Activated B cell treated with CpG ODN at 0.5 μM for 24 hours (primary cell): ENCODE measurements at regions of chr17 and their contacts with region 1.

Region 1: DNA sequence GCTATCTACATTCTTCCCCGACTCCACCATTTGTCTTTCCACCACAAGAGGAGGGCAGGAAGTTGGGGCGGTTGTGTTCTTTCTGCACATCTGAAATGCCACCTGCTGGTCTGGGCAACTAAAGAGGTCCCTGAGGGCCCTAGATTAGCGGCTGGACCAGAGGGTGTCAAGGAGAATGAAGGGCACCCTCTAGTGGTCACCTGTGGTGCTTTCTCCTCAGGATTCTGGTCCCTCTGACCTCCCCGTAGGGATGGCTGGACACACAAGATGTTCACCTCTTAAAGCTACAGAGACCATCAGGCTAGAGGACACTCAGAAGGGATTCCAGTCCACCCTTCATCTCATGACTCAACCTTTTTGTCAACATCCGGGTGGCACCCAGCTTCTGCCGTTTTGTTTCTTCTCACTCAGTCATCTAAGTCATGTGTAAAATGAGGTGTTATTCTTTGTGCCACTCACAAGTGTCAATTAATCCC is 2.9 kb upstream of the SCIMP start:
- DNase-seq: no peak
- ATAC-seq: peak; percentile 18
- H3K4me3 Mint-ChIP-seq: peak overlapping the region; percentile 36
- H3K27ac Mint-ChIP-seq: peak overlapping the region; percentile 98
- H3K4me1 Mint-ChIP-seq: peaks cover 78% of the 10 kb centered on the region
- H3K27me3 Mint-ChIP-seq: no peaks in the 10 kb centered on the region
- CTCF ChIP-seq: no peak

Region 2: GRCh38 chr17:5111402-5112204 is 126.0 kb before region 1 on chr17 and contains the start of gene ZNF232:
- CTCF ChIA-PET with region 1: no interaction called
- POLR2A ChIA-PET with region 1: interaction called, 3 read pairs
- intact Hi-C with region 1: loop called (anchors 5 kb)
- DNase-seq: peak; percentile 91
- ATAC-seq: peak; percentile 90
- H3K4me3 Mint-ChIP-seq: peak within 1 kb of the TSS; percentile 85
- H3K27ac Mint-ChIP-seq: peak within 1 kb of the TSS; percentile 79
- H3K4me1 Mint-ChIP-seq: peaks cover 27% of the 10 kb centered on the region
- H3K27me3 Mint-ChIP-seq: peaks cover 11% of the 10 kb centered on the region
- CTCF ChIP-seq: no peak
- total RNA-seq, gene ZNF232: 12.6 and 14.8 TPM in 2 replicates

Region 3: DNA sequence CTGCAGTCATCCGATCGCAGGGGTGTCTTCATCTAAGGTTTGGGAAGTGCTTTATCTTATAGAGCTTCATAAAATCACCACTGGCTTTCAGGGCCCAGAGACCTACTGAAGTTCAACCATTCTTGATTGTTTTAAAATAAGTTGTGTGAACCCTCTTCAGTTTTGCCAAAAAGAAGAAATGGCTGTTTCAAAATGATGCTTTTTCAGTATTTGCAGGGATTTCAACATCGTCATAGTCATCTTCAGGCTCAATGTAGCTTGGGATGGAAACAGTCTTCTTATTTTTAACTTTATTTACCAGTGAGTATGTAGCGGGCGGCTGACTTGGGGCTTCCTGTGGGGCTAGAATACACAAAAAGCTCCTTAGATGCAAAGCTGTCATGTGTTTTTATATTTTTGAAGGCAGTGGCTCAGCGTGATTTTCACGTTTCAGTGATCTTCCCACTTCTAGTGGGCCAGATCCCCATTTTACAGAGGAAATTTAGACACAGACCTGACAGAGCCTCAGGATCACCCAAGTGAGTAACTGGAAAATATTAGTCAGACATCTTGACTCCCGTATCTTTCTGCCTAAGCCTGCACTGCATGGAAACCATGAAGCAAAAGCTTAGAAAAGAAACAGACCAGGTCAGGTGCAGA is 26.8 kb before region 1 on chr17:
- CTCF ChIA-PET with region 1: interaction called, 4 read pairs
- POLR2A ChIA-PET with region 1: interaction called, 130 read pairs
- intact Hi-C with region 1: loop called (anchors 1 kb)
- DNase-seq: no peak
- ATAC-seq: peak; percentile 74
- H3K4me3 Mint-ChIP-seq: peak overlapping the region; percentile 68
- H3K27ac Mint-ChIP-seq: peak overlapping the region; percentile 96
- H3K4me1 Mint-ChIP-seq: peaks cover 78% of the 10 kb centered on the region
- H3K27me3 Mint-ChIP-seq: no peaks in the 10 kb centered on the region
- CTCF ChIP-seq: no peak

Region 4: DNA sequence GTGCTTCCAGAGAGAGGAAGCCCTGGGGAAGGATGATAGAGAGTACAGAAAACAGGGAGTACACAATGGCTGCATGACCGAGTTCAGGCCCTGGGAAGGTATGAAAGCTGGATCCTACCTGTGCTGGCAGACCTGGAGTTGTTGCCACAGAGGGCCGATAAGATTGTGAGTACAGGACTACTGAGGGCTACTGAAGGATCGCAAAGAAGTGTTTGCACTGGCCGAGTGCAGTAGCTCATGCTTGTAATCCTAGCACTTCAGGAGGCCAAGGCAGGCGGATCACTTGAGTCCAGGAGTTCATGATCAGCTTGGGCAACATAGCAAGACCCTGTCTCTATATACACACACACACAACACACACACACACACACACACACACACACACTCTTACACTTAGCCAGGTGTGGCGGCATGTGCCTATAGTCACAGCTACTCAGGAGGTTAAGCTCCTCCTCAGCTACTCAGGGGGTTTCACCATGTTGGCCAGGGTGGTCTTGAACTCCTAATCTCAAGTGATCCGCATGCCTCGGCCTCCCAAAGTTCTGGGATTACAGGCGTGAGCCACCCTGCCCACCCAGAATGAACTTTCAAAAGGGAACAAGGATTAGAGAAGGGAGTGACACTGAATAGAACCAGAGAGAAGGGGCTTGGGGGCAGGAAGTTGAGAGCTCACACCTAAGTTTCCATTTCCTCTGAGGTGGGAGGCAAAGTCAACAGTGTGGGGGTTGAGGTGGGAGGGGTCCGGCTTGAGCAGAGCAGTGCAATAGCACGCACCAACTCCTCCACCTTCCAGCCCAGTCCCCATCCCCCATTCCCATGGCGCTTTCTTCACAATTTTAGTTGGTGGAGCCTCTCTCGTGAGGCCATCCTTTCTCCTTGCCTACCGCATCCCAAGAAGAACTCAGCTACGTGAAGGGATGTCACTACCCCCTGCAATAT is 10.4 kb before region 1 on chr17:
- CTCF ChIA-PET with region 1: interaction called, 16 read pairs
- POLR2A ChIA-PET with region 1: interaction called, 45 read pairs
- intact Hi-C with region 1: no loop called
- DNase-seq: no peak
- ATAC-seq: peak; percentile 56
- H3K4me3 Mint-ChIP-seq: peak overlapping the region; percentile 75
- H3K27ac Mint-ChIP-seq: peak overlapping the region; percentile 98
- H3K4me1 Mint-ChIP-seq: peaks cover 100% of the 10 kb centered on the region
- H3K27me3 Mint-ChIP-seq: no peaks in the 10 kb centered on the region
- CTCF ChIP-seq: no peak

Region 5: GRCh38 chr17:5396612-5397011 is 159.0 kb after region 1 on chr17:
- CTCF ChIA-PET with region 1: no interaction called
- POLR2A ChIA-PET with region 1: interaction called, 17 read pairs
- intact Hi-C with region 1: no loop called
- DNase-seq: no peak
- ATAC-seq: no peak
- H3K4me3 Mint-ChIP-seq: no peak overlapping the region
- H3K27ac Mint-ChIP-seq: no peak overlapping the region
- H3K4me1 Mint-ChIP-seq: peaks cover 4% of the 10 kb centered on the region
- H3K27me3 Mint-ChIP-seq: no peaks in the 10 kb centered on the region
- CTCF ChIP-seq: no peak

Region 6: GRCh38 chr17:5769593-5770354 is 532.2 kb after region 1 on chr17:
- CTCF ChIA-PET with region 1: no interaction called
- POLR2A ChIA-PET with region 1: no interaction called
- intact Hi-C with region 1: no loop called
- DNase-seq: no peak
- ATAC-seq: no peak
- H3K4me3 Mint-ChIP-seq: no peak overlapping the region
- H3K27ac Mint-ChIP-seq: no peak overlapping the region
- H3K4me1 Mint-ChIP-seq: no peaks in the 10 kb centered on the region
- H3K27me3 Mint-ChIP-seq: peaks cover 2% of the 10 kb centered on the region
- CTCF ChIP-seq: no peak